Activated CD8-positive, alpha-beta T cell treated with anti-CD3 and anti-CD28 coated beads, Interleukin-2, amount 10 ng/mL, durations not matched to agents 7 days and 5 days (primary cell): ENCODE measurements at regions of chr10 and their contacts with region 1.

Region 1: DNA sequence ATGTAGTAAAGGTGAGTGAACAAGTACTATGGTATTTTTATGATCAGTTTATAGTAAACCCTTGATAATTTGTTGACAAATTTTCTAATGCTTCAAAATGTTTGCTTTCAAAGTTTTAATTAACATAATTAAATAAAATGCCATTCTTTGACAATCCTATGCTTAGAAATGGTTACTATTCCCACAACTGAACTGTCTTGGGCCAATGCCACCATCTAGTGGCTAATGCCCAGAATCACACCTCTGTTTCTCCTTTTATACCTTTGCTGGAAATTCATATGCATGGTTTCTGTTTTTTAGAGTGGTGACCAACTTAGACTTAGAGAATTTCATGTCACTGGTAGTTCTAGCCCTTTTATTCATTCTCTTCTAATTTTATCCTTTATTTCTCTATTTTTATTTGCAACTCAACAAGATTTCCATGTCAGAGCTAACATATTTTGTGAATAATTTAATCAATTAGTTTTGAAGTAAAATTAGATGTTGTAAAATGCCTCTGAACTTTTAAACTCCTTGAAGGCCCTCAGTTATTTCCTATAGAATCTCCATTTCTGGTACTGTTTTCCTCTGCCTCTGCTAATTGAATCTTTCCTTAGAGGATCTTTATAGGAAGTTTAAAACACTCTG is 31.1 kb downstream of the PCGF5 start:
- DNase-seq: peak; percentile 64
- ATAC-seq: peak; percentile 70
- H3K4me3 Mint-ChIP-seq: no peak overlapping the region
- H3K27ac Mint-ChIP-seq: no peak overlapping the region
- H3K4me1 Mint-ChIP-seq: peaks cover 8% of the 10 kb centered on the region
- H3K27me3 Mint-ChIP-seq: no peaks in the 10 kb centered on the region

Region 2: DNA sequence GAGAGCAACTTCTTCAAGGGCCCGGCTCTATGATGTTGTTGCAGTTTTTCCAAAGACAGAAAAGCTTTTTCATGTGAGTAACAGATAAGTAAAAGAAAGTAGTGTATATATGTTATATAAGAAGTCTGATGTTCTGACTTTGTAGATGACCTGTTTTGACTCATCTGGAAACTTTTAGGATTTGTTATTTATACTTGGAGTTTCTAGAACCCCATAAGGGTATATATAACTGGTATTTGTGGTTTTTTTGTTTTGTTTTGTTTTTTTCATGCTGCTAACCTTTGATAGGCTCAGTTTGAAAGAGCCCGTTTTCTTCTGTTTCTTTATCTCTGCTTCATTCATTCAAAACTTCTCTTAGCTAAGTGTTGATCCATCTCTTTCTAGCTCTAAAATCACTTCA is 372.5 kb before region 1 on chr10:
- CTCF ChIA-PET with region 1: interaction called, 14 read pairs
- POLR2A ChIA-PET with region 1: no interaction called
- DNase-seq: no peak
- ATAC-seq: no peak
- H3K4me3 Mint-ChIP-seq: no peak overlapping the region
- H3K27ac Mint-ChIP-seq: no peak overlapping the region
- H3K4me1 Mint-ChIP-seq: peaks cover 4% of the 10 kb centered on the region
- H3K27me3 Mint-ChIP-seq: no peaks in the 10 kb centered on the region

Region 3: GRCh38 chr10:91043173-91043910 is 208.2 kb before region 1 on chr10:
- CTCF ChIA-PET with region 1: interaction called, 10 read pairs
- POLR2A ChIA-PET with region 1: no interaction called
- DNase-seq: no peak
- ATAC-seq: no peak
- H3K4me3 Mint-ChIP-seq: no peak overlapping the region
- H3K27ac Mint-ChIP-seq: no peak overlapping the region
- H3K4me1 Mint-ChIP-seq: peaks cover 2% of the 10 kb centered on the region
- H3K27me3 Mint-ChIP-seq: peaks cover 27% of the 10 kb centered on the region

Region 4: DNA sequence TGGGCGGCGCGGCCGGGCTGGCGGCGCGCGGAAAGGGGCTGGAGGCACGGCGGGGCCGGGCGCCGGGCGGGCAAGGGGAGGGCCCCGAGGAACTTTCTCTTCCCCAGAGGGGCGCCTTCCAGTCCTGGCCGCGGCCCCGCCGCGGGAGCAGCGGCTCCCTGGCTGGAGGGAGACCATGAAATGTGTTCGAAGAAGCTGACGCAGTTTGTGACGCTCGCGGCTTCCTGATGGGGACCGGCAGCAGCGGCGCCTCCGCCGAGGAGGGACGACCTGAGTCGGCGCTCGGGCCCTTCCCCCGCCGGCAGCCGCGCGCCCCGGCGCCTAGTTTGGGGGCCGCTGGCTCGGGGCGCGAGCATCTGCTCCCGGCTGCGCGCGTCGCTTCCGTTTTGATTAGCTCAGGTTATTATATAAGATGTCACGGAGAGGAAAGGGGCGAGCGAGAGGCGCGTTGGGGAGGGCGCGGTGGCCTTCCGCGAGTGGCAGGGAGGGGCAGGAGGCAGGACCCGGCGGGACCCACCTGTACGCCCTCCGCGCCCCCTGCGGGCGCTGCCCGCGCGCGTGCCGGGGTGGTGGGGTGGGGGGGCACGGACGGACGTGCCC is 88.2 kb before region 1 on chr10:
- CTCF ChIA-PET with region 1: interaction called, 30 read pairs
- POLR2A ChIA-PET with region 1: interaction called, 3 read pairs
- DNase-seq: peak; percentile 84
- ATAC-seq: peak; percentile 70
- H3K4me3 Mint-ChIP-seq: peak overlapping the region; percentile 84
- H3K27ac Mint-ChIP-seq: peak overlapping the region; percentile 83
- H3K4me1 Mint-ChIP-seq: peaks cover 32% of the 10 kb centered on the region
- H3K27me3 Mint-ChIP-seq: no peaks in the 10 kb centered on the region

Region 5: DNA sequence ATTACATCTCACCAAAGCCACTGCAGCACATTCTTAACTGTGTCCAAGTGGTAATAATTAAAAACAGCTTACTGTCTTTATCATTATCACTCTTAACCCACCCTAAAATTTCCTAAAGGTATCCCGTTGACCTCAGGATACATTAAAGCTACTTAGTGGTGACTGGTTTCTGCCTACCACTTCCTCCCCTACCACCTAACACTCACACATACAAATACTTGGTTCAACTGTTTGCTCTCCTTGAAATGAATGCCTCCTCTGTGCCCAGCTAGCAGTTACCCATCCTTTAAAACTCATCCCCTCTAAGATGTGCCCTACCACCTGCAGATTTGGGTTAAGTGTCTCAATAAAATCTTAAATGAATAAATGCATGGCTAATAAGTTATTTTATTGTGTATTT is 24.0 kb before region 1 on chr10:
- CTCF ChIA-PET with region 1: interaction called, 16 read pairs
- POLR2A ChIA-PET with region 1: no interaction called
- DNase-seq: no peak
- ATAC-seq: peak; percentile 54
- H3K4me3 Mint-ChIP-seq: peak overlapping the region; percentile 20
- H3K27ac Mint-ChIP-seq: peak overlapping the region; percentile 69
- H3K4me1 Mint-ChIP-seq: peaks cover 53% of the 10 kb centered on the region
- H3K27me3 Mint-ChIP-seq: no peaks in the 10 kb centered on the region

Region 6: GRCh38 chr10:91307489-91307888 is 55.9 kb after region 1 on chr10:
- CTCF ChIA-PET with region 1: no interaction called
- POLR2A ChIA-PET with region 1: no interaction called
- DNase-seq: no peak
- ATAC-seq: no peak
- H3K4me3 Mint-ChIP-seq: no peak overlapping the region
- H3K27ac Mint-ChIP-seq: no peak overlapping the region
- H3K4me1 Mint-ChIP-seq: no peaks in the 10 kb centered on the region
- H3K27me3 Mint-ChIP-seq: peaks cover 12% of the 10 kb centered on the region

Region 7: GRCh38 chr10:91340613-91341362 is 89.2 kb after region 1 on chr10:
- CTCF ChIA-PET with region 1: no interaction called
- POLR2A ChIA-PET with region 1: no interaction called
- DNase-seq: no peak
- ATAC-seq: no peak
- H3K4me3 Mint-ChIP-seq: no peak overlapping the region
- H3K27ac Mint-ChIP-seq: no peak overlapping the region
- H3K4me1 Mint-ChIP-seq: no peaks in the 10 kb centered on the region
- H3K27me3 Mint-ChIP-seq: no peaks in the 10 kb centered on the region

Region 8: GRCh38 chr10:91389636-91390512 is 138.3 kb after region 1 on chr10:
- CTCF ChIA-PET with region 1: no interaction called
- POLR2A ChIA-PET with region 1: no interaction called
- DNase-seq: peak; percentile 44
- ATAC-seq: peak; percentile 96
- H3K4me3 Mint-ChIP-seq: no peak overlapping the region
- H3K27ac Mint-ChIP-seq: no peak overlapping the region
- H3K4me1 Mint-ChIP-seq: peaks cover 6% of the 10 kb centered on the region
- H3K27me3 Mint-ChIP-seq: peaks cover 26% of the 10 kb centered on the region